Activated CD4-positive, alpha-beta memory T cell treated with anti-CD3 and anti-CD28 coated beads for 36 hours (primary cell): ENCODE measurements at regions of chr15 and their contacts with region 1.

Region 1: DNA sequence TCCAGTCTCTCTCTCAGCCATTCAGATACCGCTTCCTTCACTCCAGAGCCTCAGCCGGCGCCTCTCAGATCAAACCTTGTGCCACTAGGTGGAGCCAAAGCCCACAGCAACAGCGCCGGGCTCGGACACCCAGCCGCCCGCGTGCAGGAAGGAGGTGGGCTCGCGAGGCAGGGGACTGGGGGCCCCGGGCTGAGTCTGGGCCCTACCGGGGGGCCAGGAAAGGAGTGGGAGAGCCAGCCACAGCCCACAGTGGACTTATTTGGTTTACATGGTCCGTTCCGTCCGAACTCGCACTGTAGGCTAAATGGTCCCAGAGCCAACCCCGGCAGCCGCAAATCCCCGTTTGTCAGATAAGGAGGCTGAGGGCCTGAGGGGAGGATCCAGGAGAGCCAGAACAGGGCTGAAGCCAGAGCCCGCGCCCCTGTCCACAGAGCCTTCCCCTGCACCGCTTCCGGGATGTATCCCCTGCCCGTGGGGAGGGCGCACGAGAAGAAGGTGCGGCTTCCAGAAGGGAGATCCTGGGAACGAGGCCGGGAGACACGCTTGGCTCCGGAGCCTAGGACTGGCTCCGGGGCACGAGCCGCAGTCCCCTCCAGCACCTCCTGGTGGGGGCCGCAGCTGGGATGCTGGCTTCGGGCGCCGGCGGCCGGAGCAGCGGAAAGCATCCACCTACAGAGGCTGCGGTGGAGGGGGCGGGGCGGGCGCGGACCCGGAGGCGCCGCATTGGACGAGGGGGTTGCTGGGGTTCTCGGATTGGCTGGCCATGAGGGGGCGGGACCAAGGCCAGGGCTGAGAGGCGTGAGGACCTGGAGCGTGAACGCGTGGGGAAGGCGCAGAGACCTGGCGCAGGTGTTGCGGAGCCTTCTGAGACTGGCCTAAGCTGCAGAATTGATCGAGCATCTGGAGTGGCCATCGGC is 6.5 kb upstream of the CYP11A1 start:
- DNase-seq: peak; percentile 97
- H3K4me3 Mint-ChIP-seq: peak overlapping the region; percentile 71
- H3K27ac Mint-ChIP-seq: peak overlapping the region; percentile 35
- H3K4me1 Mint-ChIP-seq: peaks cover 24% of the 10 kb centered on the region
- H3K27me3 Mint-ChIP-seq: peaks cover 3% of the 10 kb centered on the region

Region 2: DNA sequence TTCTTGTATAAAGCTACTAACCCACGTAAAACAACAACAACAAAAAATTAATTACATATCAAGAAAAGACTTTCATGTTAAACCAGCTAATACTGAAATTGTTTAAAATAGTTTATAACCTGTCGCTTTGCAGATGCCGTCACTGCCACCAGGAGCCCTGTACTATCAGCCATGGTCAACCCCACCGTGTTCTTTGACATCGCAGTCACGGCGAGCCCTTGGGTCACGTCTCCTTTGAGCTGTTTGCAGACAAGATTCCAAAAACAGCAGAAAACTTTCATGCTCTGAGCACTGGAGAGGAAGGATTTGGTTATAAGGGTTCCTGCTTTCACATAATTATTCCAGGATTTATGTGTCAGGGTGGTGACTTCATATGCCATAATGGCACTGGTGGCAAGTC is 12.6 kb before region 1 on chr15:
- CTCF ChIA-PET with region 1: interaction called, 10 read pairs
- POLR2A ChIA-PET with region 1: no interaction called
- intact Hi-C with region 1: no loop called
- DNase-seq: no peak
- H3K4me3 Mint-ChIP-seq: no peak overlapping the region
- H3K27ac Mint-ChIP-seq: no peak overlapping the region
- H3K4me1 Mint-ChIP-seq: peaks cover 3% of the 10 kb centered on the region
- H3K27me3 Mint-ChIP-seq: peaks cover 16% of the 10 kb centered on the region

Region 3: GRCh38 chr15:74433592-74434262 is 59.7 kb after region 1 on chr15 and contains the start of gene SEMA7A:
- CTCF ChIA-PET with region 1: interaction called, 652 read pairs
- POLR2A ChIA-PET with region 1: interaction called, 9 read pairs
- intact Hi-C with region 1: loop called (anchors 1 kb)
- DNase-seq: peak; percentile 90
- H3K4me3 Mint-ChIP-seq: peak within 1 kb of the TSS; percentile 86
- H3K27ac Mint-ChIP-seq: peak within 1 kb of the TSS; percentile 89
- H3K4me1 Mint-ChIP-seq: peaks cover 58% of the 10 kb centered on the region
- H3K27me3 Mint-ChIP-seq: no peaks in the 10 kb centered on the region
- total RNA-seq, gene SEMA7A: 65.9 to 68.4 TPM

Region 4: DNA sequence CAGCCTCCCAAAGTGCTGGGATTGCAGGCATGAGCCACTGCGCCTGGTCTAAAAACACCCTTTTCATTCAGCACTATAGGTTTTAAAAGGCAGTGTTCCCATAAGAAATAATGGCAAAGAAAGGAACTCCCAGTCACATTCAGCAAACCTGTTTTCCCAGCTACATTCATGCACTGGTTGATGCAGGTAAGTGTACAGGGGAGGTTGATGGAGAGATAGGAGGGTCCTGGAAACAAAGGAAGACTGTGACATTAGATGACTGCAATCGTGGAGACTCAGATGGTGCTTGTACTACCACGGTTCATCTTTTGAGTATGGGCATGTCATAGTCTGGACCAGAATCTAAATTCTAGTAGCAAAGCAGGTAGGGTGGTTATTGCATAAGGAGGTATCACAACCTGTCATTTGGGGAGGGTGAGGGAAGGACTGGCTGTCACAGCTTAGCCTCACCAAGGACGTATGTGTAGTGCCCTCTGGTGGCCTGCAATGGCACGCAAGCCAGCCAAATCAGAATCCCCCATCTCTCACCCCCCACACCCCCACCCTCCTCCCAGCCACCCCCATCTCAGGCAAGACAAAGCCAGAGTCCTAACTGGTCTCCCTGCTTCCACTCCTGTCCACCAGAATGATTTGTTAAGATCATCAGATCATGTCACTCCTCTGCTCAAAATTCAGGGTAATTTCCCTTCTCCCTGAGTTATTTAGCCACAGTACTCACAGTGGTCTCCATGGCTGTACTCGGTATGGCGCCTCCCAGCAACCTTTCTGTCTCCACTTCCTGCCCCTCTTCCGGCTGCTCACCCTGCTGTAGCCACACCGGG is 115.7 kb after region 1 on chr15:
- CTCF ChIA-PET with region 1: interaction called, 25 read pairs
- POLR2A ChIA-PET with region 1: no interaction called
- intact Hi-C with region 1: loop called (anchors 1 kb)
- DNase-seq: peak; percentile 80
- H3K4me3 Mint-ChIP-seq: no peak overlapping the region
- H3K27ac Mint-ChIP-seq: no peak overlapping the region
- H3K4me1 Mint-ChIP-seq: peaks cover 10% of the 10 kb centered on the region
- H3K27me3 Mint-ChIP-seq: no peaks in the 10 kb centered on the region

Region 5: GRCh38 chr15:74615508-74616365 is 241.7 kb after region 1 on chr15 and contains the start of gene CLK3:
- CTCF ChIA-PET with region 1: interaction called, 7 read pairs
- POLR2A ChIA-PET with region 1: interaction called, 3 read pairs
- intact Hi-C with region 1: loop called (anchors 2 kb)
- DNase-seq: peak; percentile 97
- H3K4me3 Mint-ChIP-seq: peak within 1 kb of the TSS; percentile 91
- H3K27ac Mint-ChIP-seq: peak within 1 kb of the TSS; percentile 94
- H3K4me1 Mint-ChIP-seq: peaks cover 35% of the 10 kb centered on the region
- H3K27me3 Mint-ChIP-seq: no peaks in the 10 kb centered on the region
- total RNA-seq, gene CLK3: 118 to 124 TPM